ENCODE measurements at regions of chr3 and their contacts with region 1.

Region 1: GRCh38 chr3:150787741-150788370 is 24.9 kb upstream of the SIAH2 start:
- DNase-seq: peak; percentile 91
- ATAC-seq: peak; percentile 90
- H3K4me3 Mint-ChIP-seq: no peak overlapping the region
- H3K27ac Mint-ChIP-seq: no peak overlapping the region
- H3K4me1 Mint-ChIP-seq: peaks cover 15% of the 10 kb centered on the region
- H3K27me3 Mint-ChIP-seq: peaks cover 9% of the 10 kb centered on the region
- CTCF ChIP-seq: peak; percentile 93

Region 2: GRCh38 chr3:150763122-150763841 is 24.6 kb before region 1 on chr3 and contains the start of gene SIAH2:
- CTCF ChIA-PET with region 1: interaction called, 14 read pairs
- POLR2A ChIA-PET with region 1: no interaction called
- DNase-seq: peak; percentile 69
- ATAC-seq: peak; percentile 73
- H3K4me3 Mint-ChIP-seq: peak within 1 kb of the TSS; percentile 89
- H3K27ac Mint-ChIP-seq: peak within 1 kb of the TSS; percentile 68
- H3K4me1 Mint-ChIP-seq: peaks cover 42% of the 10 kb centered on the region
- H3K27me3 Mint-ChIP-seq: peaks cover 45% of the 10 kb centered on the region
- CTCF ChIP-seq: no peak
- total RNA-seq, gene SIAH2: 15.8 to 17.1 TPM (median 15.9 TPM) in 3 replicates

Region 3: DNA sequence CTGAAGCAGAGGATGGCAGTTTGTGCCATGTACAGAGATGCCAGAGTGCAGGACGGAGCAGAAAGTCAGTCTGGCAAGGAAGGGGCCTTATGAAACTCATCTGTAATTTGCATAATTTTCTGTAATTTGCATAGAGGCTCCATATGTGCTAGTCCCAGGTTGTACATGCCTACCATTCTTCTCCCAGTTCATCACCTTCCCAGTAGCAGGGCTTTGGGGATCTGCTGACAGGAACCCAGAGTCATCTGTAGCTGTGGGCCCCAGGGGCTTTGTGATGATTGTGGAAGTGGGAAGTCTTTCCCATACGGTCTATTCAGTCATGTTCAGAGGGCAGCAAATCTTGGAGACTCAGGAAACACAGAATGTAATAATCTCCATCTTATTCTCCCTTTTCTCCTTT is 17.5 kb after region 1 on chr3:
- CTCF ChIA-PET with region 1: interaction called, 17 read pairs
- POLR2A ChIA-PET with region 1: no interaction called
- DNase-seq: no peak
- ATAC-seq: no peak
- H3K4me3 Mint-ChIP-seq: no peak overlapping the region
- H3K27ac Mint-ChIP-seq: no peak overlapping the region
- H3K4me1 Mint-ChIP-seq: peaks cover 47% of the 10 kb centered on the region
- H3K27me3 Mint-ChIP-seq: peaks cover 45% of the 10 kb centered on the region
- CTCF ChIP-seq: no peak

Region 4: GRCh38 chr3:150840802-150841515 is 53.1 kb after region 1 on chr3:
- CTCF ChIA-PET with region 1: interaction called, 11 read pairs
- POLR2A ChIA-PET with region 1: no interaction called
- DNase-seq: no peak
- ATAC-seq: peak; percentile 34; the same call in 1 of the 2 replicates
- H3K4me3 Mint-ChIP-seq: no peak overlapping the region
- H3K27ac Mint-ChIP-seq: no peak overlapping the region
- H3K4me1 Mint-ChIP-seq: peaks cover 26% of the 10 kb centered on the region
- H3K27me3 Mint-ChIP-seq: peaks cover 76% of the 10 kb centered on the region
- CTCF ChIP-seq: no peak

Region 5: DNA sequence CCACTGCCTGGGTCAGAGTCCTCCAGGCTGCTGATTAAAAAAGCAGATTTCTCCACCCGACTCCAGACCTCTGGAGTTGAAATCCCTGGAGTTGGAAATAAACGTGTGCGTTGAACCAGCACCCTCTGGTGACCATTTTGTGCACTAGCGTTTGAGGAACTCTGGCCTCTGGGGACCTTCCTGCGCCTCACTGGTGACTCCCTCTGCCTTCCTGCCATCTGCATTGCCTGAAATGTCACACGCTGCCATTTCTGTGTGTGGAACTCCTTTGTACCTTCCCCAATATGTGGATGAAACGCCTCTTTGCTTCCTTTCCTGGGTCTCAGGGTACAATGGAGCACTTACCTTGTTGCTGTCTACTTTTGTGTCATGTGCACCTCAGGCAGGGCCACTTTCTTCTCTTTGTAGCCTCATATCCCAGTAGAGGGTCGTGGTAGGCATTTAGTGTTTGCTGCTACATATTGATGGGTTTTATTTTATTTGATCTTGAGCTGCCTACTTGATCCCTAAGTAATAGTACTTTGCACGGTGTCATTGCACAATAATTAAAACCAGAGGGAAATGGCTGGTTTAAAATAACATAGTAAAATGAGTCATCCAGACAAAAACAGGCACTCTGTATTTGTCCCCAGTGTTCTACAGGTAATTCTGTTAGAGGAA is 358.3 kb after region 1 on chr3:
- CTCF ChIA-PET with region 1: interaction called, 12 read pairs
- POLR2A ChIA-PET with region 1: no interaction called
- DNase-seq: peak; percentile 73
- ATAC-seq: peak; percentile 94
- H3K4me3 Mint-ChIP-seq: no peak overlapping the region
- H3K27ac Mint-ChIP-seq: no peak overlapping the region
- H3K4me1 Mint-ChIP-seq: peaks cover 10% of the 10 kb centered on the region; the same call in 1 of the 2 replicates
- H3K27me3 Mint-ChIP-seq: no peaks in the 10 kb centered on the region
- CTCF ChIP-seq: peak; percentile 82

Measured in WTC11 (cell line).